Calu3 (cell line): ENCODE measurements at regions of chr17 and their contacts with region 1.

Region 1: DNA sequence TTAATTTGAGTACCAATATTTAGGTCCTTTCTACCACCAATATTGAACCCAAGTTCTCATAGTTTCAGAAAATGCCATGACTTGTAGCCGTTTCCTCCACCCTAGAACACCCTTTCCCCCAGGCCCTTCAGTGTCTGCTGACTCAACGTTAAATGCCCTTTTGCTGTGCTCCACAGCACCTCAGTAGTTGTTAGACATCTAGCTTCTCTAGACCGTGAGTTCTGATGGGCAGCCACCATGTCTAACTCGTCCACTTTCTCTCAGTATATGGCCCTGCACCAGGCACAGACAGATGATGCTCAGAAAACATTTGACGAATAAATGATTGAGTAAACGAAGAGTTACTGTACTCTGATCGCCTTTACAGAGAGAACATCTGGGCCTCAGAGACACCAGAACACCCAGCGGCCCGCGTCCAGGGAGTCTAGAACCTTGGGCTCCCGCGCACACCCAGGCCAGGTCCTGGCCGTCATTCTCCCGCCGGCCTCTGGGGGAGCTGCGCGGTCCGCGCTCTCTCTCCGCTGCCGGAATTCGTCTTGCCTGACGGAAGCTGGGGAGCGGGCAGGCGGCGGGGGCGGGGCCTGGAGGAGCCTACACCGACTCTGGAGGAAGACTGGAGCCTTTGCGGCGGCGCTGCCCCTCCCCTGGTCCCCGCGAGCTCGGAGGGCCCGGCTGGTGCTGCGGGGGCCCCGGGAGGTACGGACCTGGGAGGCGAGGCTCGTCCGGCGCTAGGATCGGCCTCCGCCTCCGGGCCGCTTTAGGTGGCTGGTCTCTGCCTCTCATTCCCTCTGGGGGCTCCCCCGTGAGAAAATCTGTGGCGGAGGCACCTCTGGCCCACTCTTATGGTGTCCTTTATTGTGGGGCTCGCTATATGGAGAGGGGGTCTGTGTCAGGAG is at the start of gene NKIRAS2:
- DNase-seq: peak; percentile 99
- H3K4me3 Mint-ChIP-seq: peak within 1 kb of the TSS; percentile 99
- H3K27ac Mint-ChIP-seq: peak within 1 kb of the TSS; percentile 99
- H3K4me1 Mint-ChIP-seq: peaks cover 69% of the 10 kb centered on the region
- H3K27me3 Mint-ChIP-seq: no peaks in the 10 kb centered on the region
- CTCF ChIP-seq: peak; percentile 96
- total RNA-seq, gene NKIRAS2: 55.7 and 58.4 TPM in 2 replicates

Region 2: GRCh38 chr17:41966463-41967140 is 53.2 kb before region 1 on chr17 and contains the start of gene CNP:
- CTCF ChIA-PET with region 1: interaction called, 12 read pairs
- intact Hi-C with region 1: loop called (anchors 2 kb)
- DNase-seq: peak; percentile 98
- H3K4me3 Mint-ChIP-seq: peak within 1 kb of the TSS; percentile 58
- H3K27ac Mint-ChIP-seq: peak within 1 kb of the TSS; percentile 48
- H3K4me1 Mint-ChIP-seq: peaks cover 16% of the 10 kb centered on the region
- H3K27me3 Mint-ChIP-seq: peaks cover 11% of the 10 kb centered on the region
- CTCF ChIP-seq: no peak
- total RNA-seq, gene CNP: 144 and 156 TPM in 2 replicates

Region 3: GRCh38 chr17:42002792-42003301 is 16.9 kb before region 1 on chr17:
- CTCF ChIA-PET with region 1: interaction called, 38 read pairs
- intact Hi-C with region 1: no loop called
- DNase-seq: no peak
- H3K4me3 Mint-ChIP-seq: peak overlapping the region; percentile 70
- H3K27ac Mint-ChIP-seq: peak overlapping the region; percentile 88
- H3K4me1 Mint-ChIP-seq: peaks cover 64% of the 10 kb centered on the region
- H3K27me3 Mint-ChIP-seq: no peaks in the 10 kb centered on the region
- CTCF ChIP-seq: no peak